Right ventricle myocardium superior (tissue), 1 donor: ENCODE measurements at regions of chr12 and their contacts with region 1.

Region 1: DNA sequence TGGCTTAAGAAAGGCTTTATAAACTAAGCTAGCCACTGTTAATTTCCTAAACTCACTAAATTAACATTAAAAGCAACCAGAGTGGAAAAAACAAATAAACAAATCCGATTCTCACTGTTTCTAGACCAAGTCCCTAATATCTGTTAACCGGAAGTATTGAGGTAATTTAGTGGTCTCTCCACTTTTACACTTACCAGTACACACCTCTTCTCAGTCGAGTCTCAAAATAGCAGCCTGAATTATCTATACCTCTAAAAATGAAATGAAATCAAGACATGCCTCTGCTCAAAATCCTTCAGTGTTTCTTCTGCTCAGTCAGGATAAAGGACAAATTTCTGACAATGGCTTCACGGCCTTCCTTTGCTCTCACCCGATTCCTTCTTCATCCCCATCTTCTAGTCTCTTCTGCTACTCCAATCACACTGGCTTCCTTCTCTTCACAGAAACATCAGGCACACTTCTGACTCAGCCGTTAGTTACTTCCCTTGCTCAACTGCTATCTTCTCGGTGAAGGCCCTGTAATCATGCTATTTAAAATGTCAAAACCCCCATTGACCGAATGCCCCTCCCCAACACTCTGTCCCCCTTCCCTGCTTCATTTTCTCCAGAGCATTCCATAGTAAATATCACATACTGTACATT is 161.3 kb downstream of the KITLG start:
- DNase-seq: no peak
- ATAC-seq: no peak

Region 2: GRCh38 chr12:88579161-88579517 is 160.2 kb after region 1 on chr12:
- intact Hi-C with region 1: loop called (anchors 5 kb)
- DNase-seq: no peak
- ATAC-seq: peak; percentile 58

Region 3: DNA sequence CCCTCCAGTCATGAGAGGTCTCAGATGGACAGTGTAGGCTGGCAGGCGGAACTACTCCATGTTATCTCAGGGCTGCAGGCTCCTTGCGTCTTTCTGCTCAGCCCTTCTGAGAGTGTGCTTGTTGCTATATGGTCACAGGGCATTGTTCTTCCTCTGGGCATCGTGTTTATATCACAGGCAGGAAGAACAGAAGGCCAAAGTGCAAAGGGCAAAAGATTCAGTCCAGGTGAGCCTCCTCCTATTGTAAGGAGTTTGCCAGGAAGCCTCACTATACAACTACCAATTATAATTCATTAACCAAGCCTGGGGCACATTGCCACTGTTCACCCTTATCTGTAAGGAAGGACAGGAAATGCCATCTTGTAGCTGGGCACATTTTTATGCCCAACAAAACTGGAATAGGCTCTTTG is 356.8 kb after region 1 on chr12:
- intact Hi-C with region 1: no loop called
- DNase-seq: no peak
- ATAC-seq: no peak